ENCODE measurements at regions of chr11 and their contacts with region 1.

Region 1: GRCh38 chr11:1893581-1894359 is 2.1 kb upstream of the PRR33 start:
- DNase-seq: no peak
- H3K4me3 ChIP-seq: no peak overlapping the region
- H3K27ac ChIP-seq: no peak overlapping the region
- H3K4me1 ChIP-seq: no peaks in the 10 kb centered on the region
- H3K27me3 ChIP-seq: no peaks in the 10 kb centered on the region
- CTCF ChIP-seq: no peak

Region 2: GRCh38 chr11:1917671-1918516 is 24.1 kb after region 1 on chr11:
- intact Hi-C with region 1: loop called (anchors 1 kb)
- DNase-seq: no peak
- H3K4me3 ChIP-seq: no peak overlapping the region
- H3K27ac ChIP-seq: no peak overlapping the region
- H3K4me1 ChIP-seq: no peaks in the 10 kb centered on the region
- H3K27me3 ChIP-seq: no peaks in the 10 kb centered on the region
- CTCF ChIP-seq: peak; percentile 33

Region 3: DNA sequence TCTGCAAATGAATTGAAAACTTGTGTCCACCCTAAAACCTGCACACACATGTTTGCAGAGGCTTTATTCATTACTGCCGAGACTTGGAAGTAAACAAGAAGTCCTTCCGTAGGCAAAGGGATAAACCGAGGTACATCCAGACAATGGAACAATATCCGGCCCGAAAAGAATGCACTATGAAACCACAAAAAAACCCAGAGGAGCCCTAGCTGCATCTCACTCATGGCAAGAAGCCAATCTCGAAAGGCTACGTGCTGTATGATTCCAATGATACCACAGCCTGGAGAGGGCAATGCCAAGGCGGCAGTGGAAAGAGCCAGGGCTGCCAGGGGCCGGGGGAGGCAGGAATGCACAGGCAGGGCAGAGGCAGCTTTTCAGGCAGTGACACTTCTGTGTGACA is 50.2 kb after region 1 on chr11:
- intact Hi-C with region 1: loop called (anchors 1 kb)
- DNase-seq: no peak
- H3K4me3 ChIP-seq: no peak overlapping the region
- H3K27ac ChIP-seq: no peak overlapping the region
- H3K4me1 ChIP-seq: no peaks in the 10 kb centered on the region
- H3K27me3 ChIP-seq: no peaks in the 10 kb centered on the region
- CTCF ChIP-seq: no peak